Thyroid gland (tissue), 4 donors: ENCODE measurements at regions of chr1 and their contacts with region 1.

Region 1: DNA sequence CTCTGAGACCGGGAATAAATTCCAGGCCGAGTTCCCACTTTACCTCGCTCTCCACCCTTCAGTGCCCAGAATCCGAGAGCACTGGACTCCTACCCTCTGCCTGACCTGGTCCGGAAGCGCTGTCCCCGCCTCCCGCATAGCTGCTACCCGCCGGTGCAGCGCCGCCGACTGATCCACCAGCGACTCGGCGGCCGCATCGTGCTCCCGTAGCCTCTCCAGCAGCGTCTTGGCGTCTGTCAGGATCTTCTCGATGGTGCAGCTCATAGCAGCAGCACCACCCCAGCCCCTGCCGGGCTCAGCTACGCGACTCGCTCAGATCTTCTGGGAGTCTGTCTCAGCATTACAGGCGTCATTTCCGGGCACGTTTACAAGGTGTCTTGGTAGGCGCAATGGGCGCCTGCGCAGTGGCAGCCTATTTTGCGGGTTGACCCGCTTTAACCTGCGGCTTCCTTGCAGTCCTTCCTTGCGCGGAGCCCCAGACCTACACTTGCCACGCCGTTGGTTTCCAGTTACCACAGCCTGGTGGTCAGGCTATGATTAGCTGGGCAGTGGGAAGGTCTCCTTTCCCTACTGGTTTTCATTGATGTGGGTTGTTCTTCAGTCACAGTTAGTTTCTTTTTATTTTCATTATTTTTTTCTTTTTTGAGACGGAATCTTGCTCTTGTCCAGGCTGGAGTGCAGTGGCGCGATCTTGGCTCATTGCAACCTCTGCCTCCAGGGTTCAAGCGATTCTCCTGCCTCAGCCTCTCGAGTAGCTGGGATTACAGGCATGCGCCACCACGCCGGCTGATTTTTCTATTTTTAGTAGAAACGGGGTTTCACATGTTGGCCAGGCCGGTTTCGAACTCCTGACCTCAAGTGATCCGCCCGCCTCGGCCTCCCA is at the start of gene SIKE1:
- DNase-seq: peak; percentile 94
- H3K4me3 ChIP-seq: peak within 1 kb of the TSS; percentile 35 to 75 (median 64)
- H3K27ac ChIP-seq: peak within 1 kb of the TSS; percentile 66 to 92 (median 82)
- H3K4me1 ChIP-seq: peaks cover 0 to 8% of the 10 kb centered on the region in 2 donors
- H3K27me3 ChIP-seq: no peaks in the 10 kb centered on the region
- CTCF ChIP-seq: peak in 2 of 6 experiments; percentile 6 to 13
- POLR2A ChIP-seq: peak in 1 of 2 donors; percentile 78
- total RNA-seq, gene SIKE1: 24.2 to 41.8 (median 37.4) TPM

Region 2: DNA sequence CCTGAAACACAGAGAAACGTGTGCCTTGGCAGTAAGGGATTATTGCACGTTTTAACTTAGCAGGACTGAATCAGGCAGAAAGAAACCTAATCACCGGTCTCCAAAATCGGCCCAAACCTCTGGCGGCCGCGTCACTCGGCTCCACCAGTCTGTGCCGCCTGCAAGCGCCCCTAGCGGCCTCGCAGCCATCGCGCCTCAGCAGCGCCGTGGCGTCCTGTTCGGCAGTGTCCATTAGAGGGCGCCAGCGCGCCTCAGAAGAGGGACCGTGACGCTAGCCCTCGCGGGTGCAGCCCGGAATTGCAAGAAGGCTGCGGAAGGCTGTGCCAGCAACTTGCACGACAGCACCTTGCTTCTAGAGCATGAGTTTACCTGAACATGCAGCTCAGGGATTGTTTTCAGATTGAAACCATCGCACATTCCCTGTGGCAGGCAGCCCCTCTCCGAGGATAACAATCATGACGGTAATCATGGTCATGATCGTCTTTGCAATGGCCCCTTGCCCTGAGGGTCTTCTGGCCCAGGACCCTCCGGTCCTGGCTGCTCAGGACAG is 434.0 kb before region 1 on chr1:
- intact Hi-C with region 1: loop called (anchors 10 kb)
- DNase-seq: peak; percentile 94 to 98
- H3K4me3 ChIP-seq: peak overlapping the region; percentile 15 to 41 (median 29)
- H3K27ac ChIP-seq: peak overlapping the region; percentile 41 to 78 (median 78)
- H3K4me1 ChIP-seq: peaks cover 3 to 15% of the 10 kb centered on the region in 2 donors
- H3K27me3 ChIP-seq: no peaks in the 10 kb centered on the region
- CTCF ChIP-seq: peak; percentile 99 to 100 (median 100)
- POLR2A ChIP-seq: peak in 1 of 2 donors; percentile 45